CD8-positive, alpha-beta T cell (primary cell): ENCODE measurements at regions of chr13 and their contacts with region 1.

Region 1: GRCh38 chr13:51452361-51453206 is at the start of gene INTS6:
- DNase-seq: peak; percentile 98 to 99 (median 99)
- ATAC-seq: peak; percentile 83
- H3K4me3 ChIP-seq: peak within 1 kb of the TSS; percentile 83 to 93
- H3K4me3 Mint-ChIP-seq: peak within 1 kb of the TSS; percentile 97
- H3K27ac ChIP-seq: peak within 1 kb of the TSS; percentile 91 to 94
- H3K27ac Mint-ChIP-seq: peak within 1 kb of the TSS; percentile 99
- H3K4me1 ChIP-seq: peaks cover 31% of the 10 kb centered on the region
- H3K4me1 Mint-ChIP-seq: peaks cover 55% of the 10 kb centered on the region
- H3K27me3 ChIP-seq: no peaks in the 10 kb centered on the region
- H3K27me3 Mint-ChIP-seq: no peaks in the 10 kb centered on the region
- CTCF ChIP-seq: no peak
- total RNA-seq, gene INTS6: 49.5 to 50.0 TPM

Region 2: DNA sequence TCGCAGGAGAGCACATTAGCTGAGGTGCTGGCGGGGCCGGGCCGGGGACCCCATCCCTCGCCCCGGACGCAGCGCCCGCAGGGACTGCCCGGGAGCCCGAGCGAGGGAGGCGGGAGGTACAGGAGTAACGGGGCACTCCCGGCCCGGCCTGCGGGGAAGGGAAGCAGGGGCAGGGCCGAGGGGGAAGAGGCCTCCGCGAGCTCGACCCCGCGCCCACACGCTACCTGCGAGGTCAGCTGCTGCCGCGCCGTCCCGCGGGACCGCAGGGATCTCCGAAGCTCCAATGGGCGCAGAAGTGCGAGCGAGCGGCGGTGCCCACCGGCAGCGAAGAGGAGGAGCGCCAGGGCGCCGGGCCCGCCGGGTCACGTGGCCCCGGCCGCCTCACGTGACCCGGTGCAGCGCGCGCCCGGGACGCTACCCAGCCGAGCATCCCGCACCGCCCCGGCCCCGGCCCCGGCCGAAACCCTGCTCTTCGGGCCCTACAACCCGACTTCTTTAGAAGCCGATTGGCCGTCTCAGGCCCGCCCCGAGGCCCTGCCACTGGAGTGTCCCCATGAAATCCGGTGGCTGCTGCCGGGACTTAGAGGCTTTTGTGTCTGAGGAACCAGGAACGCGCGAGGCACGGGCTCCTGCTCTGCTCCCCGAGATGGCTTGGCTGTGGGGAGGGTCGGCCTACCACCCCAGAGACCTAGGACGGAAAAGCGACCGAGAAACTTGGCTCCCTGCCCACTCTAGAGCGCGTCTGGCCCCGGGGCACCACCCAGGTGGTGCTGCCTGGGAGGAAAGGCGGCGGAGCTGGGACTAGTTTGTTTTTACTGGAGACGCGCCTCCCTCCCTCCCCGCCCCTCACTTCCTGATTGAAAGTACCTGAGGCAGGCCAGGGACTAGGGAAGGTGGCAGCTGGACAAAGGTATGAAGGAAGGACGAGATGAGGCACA is 1867.1 kb before region 1 on chr13 and contains the start of gene RCBTB1:
- CTCF ChIA-PET with region 1: no interaction called
- POLR2A ChIA-PET with region 1: no interaction called
- intact Hi-C with region 1: loop called in 1 of 2 experiments (anchors 10 kb)
- DNase-seq: peak; percentile 33 to 88 (median 68)
- ATAC-seq: peak; percentile 88
- H3K4me3 ChIP-seq: peak within 1 kb of the TSS; percentile 89 to 97
- H3K4me3 Mint-ChIP-seq: peak within 1 kb of the TSS; percentile 90
- H3K27ac ChIP-seq: peak within 1 kb of the TSS; percentile 71 to 86
- H3K27ac Mint-ChIP-seq: peak within 1 kb of the TSS; percentile 92
- H3K4me1 ChIP-seq: peaks cover 9% of the 10 kb centered on the region
- H3K4me1 Mint-ChIP-seq: peaks cover 36% of the 10 kb centered on the region
- H3K27me3 ChIP-seq: no peaks in the 10 kb centered on the region
- H3K27me3 Mint-ChIP-seq: no peaks in the 10 kb centered on the region
- CTCF ChIP-seq: no peak
- total RNA-seq, gene RCBTB1: 12.1 to 14.2 TPM

Region 3: GRCh38 chr13:50081679-50082425 is 1370.7 kb before region 1 on chr13:
- CTCF ChIA-PET with region 1: no interaction called
- POLR2A ChIA-PET with region 1: interaction called, 3 read pairs
- intact Hi-C with region 1: loop called in 1 of 2 experiments (anchors 10 kb)
- DNase-seq: peak; percentile 97 to 99 (median 98)
- ATAC-seq: peak; percentile 69
- H3K4me3 ChIP-seq: peak overlapping the region; percentile 79
- H3K4me3 Mint-ChIP-seq: peak overlapping the region; percentile 95
- H3K27ac ChIP-seq: peak overlapping the region; percentile 61 to 85
- H3K27ac Mint-ChIP-seq: peak overlapping the region; percentile 95
- H3K4me1 ChIP-seq: peaks cover 29% of the 10 kb centered on the region
- H3K4me1 Mint-ChIP-seq: peaks cover 43% of the 10 kb centered on the region
- H3K27me3 ChIP-seq: peaks cover under 1 to 29% of the 10 kb centered on the region in 2 experiments
- H3K27me3 Mint-ChIP-seq: peaks cover 15% of the 10 kb centered on the region
- CTCF ChIP-seq: no peak

Region 4: GRCh38 chr13:51276636-51277035 is 175.9 kb before region 1 on chr13:
- CTCF ChIA-PET with region 1: no interaction called
- POLR2A ChIA-PET with region 1: no interaction called
- intact Hi-C with region 1: no loop called
- DNase-seq: no peak
- ATAC-seq: no peak
- H3K4me3 ChIP-seq: no peak overlapping the region
- H3K4me3 Mint-ChIP-seq: no peak overlapping the region
- H3K27ac ChIP-seq: no peak overlapping the region
- H3K27ac Mint-ChIP-seq: no peak overlapping the region
- H3K4me1 ChIP-seq: no peaks in the 10 kb centered on the region
- H3K4me1 Mint-ChIP-seq: no peaks in the 10 kb centered on the region
- H3K27me3 ChIP-seq: no peaks in the 10 kb centered on the region
- H3K27me3 Mint-ChIP-seq: peaks cover 2% of the 10 kb centered on the region
- CTCF ChIP-seq: no peak

Region 5: GRCh38 chr13:51465124-51465523 is 12.5 kb after region 1 on chr13:
- CTCF ChIA-PET with region 1: no interaction called
- POLR2A ChIA-PET with region 1: interaction called, 14 read pairs
- intact Hi-C with region 1: no loop called
- DNase-seq: no peak
- ATAC-seq: no peak
- H3K4me3 ChIP-seq: no peak overlapping the region
- H3K4me3 Mint-ChIP-seq: no peak overlapping the region
- H3K27ac ChIP-seq: no peak overlapping the region
- H3K27ac Mint-ChIP-seq: no peak overlapping the region
- H3K4me1 ChIP-seq: no peaks in the 10 kb centered on the region
- H3K4me1 Mint-ChIP-seq: no peaks in the 10 kb centered on the region
- H3K27me3 ChIP-seq: no peaks in the 10 kb centered on the region
- H3K27me3 Mint-ChIP-seq: no peaks in the 10 kb centered on the region
- CTCF ChIP-seq: no peak

Region 6: GRCh38 chr13:51764184-51765141 is 311.9 kb after region 1 on chr13:
- CTCF ChIA-PET with region 1: no interaction called
- POLR2A ChIA-PET with region 1: interaction called, 14 read pairs
- intact Hi-C with region 1: no loop called
- DNase-seq: peak in 8 of 9 experiments; percentile 12 to 84 (median 48)
- ATAC-seq: peak; percentile 84
- H3K4me3 ChIP-seq: peak overlapping the region; percentile 19 to 51
- H3K4me3 Mint-ChIP-seq: peak overlapping the region; percentile 80
- H3K27ac ChIP-seq: peak overlapping the region; percentile 36 to 70
- H3K27ac Mint-ChIP-seq: peak overlapping the region; percentile 87
- H3K4me1 ChIP-seq: peaks cover 15% of the 10 kb centered on the region
- H3K4me1 Mint-ChIP-seq: peaks cover 26% of the 10 kb centered on the region
- H3K27me3 ChIP-seq: no peaks in the 10 kb centered on the region
- H3K27me3 Mint-ChIP-seq: no peaks in the 10 kb centered on the region
- CTCF ChIP-seq: no peak

Region 7: DNA sequence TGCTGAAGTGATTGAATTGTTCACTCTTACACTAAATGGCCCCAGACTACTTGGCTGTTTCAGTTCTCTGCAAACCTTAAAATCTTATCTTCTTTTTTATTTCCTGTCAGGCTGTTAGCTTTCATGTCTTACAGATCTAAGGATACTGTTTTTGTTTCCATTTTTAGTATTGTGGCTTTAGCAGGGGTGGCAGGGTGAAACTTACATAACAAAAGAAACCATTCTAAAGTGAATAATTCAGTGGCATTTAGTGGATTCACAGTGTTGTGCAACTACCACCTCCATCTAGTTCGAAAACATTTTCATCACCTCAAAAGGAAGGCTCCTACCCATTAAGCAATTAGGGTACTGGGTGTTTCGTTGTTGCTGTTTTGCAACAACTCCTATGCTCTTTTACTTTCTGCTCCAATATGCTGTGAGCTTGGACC is 372.6 kb after region 1 on chr13:
- CTCF ChIA-PET with region 1: no interaction called
- POLR2A ChIA-PET with region 1: interaction called, 38 read pairs
- intact Hi-C with region 1: no loop called
- DNase-seq: peak in 2 of 9 experiments; percentile 60 to 77
- ATAC-seq: peak; percentile 60
- H3K4me3 ChIP-seq: peak overlapping the region; percentile 55 to 59
- H3K4me3 Mint-ChIP-seq: peak overlapping the region; percentile 91
- H3K27ac ChIP-seq: peak overlapping the region; percentile 64 to 74
- H3K27ac Mint-ChIP-seq: peak overlapping the region; percentile 97
- H3K4me1 ChIP-seq: peaks cover 80% of the 10 kb centered on the region
- H3K4me1 Mint-ChIP-seq: peaks cover 91% of the 10 kb centered on the region
- H3K27me3 ChIP-seq: no peaks in the 10 kb centered on the region
- H3K27me3 Mint-ChIP-seq: no peaks in the 10 kb centered on the region
- CTCF ChIP-seq: no peak

Region 8: DNA sequence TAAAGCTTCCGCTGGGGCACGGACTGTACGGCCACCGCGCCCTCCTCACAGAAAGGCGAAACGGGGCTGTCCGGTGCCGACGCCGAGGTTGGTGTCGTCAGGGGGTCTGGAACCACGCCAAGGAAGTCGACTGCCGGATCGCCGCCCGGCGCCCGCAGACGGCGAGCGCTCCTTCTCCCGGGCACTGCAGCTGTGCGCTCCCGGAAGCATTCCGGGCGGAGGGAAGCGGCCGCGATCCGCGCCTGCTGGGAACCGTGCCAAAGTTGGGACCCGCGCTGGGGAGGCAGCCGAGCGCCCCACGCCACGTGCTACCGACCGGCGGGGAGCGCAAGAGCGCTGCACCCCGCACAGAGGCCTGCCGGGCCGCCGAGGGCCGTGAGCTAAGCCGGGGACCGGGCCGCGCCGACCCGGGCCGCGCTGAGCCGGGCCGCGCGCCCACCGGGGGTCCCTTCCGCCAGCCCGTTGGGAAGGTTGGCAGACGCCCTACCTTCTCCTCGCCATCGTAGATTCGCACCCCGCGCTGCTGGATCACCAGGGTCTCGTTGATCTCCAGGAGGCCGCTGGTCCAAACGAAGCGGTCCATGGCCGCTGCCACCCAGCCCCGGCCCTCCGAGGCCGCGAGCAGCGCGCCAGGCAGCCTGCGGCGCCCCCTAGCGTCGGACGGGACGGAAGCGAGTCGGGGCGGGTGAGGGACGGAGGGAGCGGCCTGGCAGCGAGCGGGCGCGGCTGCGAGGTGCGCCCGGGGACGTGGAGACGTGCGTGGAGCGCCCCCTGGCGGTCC is 997.6 kb after region 1 on chr13 and contains the start of gene VPS36:
- CTCF ChIA-PET with region 1: interaction called, 3 read pairs
- POLR2A ChIA-PET with region 1: no interaction called
- intact Hi-C with region 1: loop called (anchors 1 to 2 kb)
- DNase-seq: peak; percentile 88 to 98 (median 95)
- ATAC-seq: peak; percentile 58
- H3K4me3 ChIP-seq: peak within 1 kb of the TSS; percentile 90 to 95
- H3K4me3 Mint-ChIP-seq: peak within 1 kb of the TSS; percentile 89
- H3K27ac ChIP-seq: peak within 1 kb of the TSS; percentile 64 to 82
- H3K27ac Mint-ChIP-seq: peak within 1 kb of the TSS; percentile 93
- H3K4me1 ChIP-seq: peaks cover 34% of the 10 kb centered on the region
- H3K4me1 Mint-ChIP-seq: peaks cover 47% of the 10 kb centered on the region
- H3K27me3 ChIP-seq: no peaks in the 10 kb centered on the region
- H3K27me3 Mint-ChIP-seq: no peaks in the 10 kb centered on the region
- CTCF ChIP-seq: peak; percentile 99
- total RNA-seq, gene VPS36: 20.7 to 24.7 TPM